ENCODE measurements at regions of chr7 and their contacts with region 1.

Region 1: DNA sequence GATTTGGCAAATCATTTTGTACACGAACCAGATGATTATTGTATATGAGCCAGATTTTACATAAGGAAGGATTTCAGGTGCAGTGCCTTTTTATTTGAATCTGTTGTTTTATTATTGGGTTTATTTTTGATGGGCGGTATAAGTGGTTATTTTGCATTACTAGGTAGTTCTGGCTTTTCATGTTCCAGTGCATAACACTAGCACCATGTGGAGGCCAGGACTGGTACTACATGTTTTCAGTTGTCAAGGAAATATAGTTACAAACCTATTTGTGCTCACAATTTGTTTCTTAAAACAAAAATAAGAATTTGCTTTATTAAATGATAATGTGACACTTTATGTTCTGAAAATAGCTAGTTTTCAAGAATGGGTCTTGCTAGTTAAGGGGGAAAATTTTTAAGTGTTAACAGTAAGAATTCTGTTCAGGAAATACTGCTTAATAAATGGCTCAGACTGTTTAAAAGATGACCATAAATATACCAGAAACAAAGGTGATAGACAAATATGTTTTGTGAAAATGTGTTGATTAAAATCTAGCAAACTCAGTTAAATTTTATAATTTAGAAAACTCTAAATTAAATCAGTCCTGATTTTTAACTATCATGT is 7.1 kb upstream of the SEMA3E start:
- DNase-seq: no peak
- ATAC-seq: no peak

Region 2: DNA sequence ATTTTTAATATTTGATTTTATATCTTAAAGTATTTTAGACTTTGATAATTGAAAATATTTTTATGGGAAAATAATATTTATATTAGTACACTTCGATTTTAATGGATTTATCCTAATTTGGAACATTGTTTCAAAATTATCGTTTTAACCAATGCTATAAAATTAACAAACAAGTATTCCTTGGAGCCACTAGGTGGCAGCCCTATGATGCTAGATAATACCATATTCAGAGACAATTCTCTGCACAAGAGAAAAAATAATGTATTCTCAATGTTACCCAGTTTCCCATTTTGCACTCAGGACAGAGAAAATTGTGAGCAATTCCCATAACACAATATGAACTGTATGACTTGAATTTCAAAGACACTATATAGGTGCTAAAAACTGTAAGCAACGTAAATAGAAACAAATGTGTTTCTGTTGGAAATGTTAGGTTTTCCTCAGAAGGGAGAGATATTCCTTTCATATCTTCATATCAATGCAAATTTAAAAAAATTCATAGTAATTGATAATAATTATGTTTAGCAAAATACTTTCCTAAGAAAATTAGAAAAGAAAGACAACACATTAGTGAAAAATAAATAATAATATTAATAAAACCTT is 245.0 kb before region 1 on chr7:
- intact Hi-C with region 1: loop called (anchors 5 kb)
- DNase-seq: no peak
- ATAC-seq: no peak